ENCODE measurements at regions of chr6 and their contacts with region 1.

Region 1: DNA sequence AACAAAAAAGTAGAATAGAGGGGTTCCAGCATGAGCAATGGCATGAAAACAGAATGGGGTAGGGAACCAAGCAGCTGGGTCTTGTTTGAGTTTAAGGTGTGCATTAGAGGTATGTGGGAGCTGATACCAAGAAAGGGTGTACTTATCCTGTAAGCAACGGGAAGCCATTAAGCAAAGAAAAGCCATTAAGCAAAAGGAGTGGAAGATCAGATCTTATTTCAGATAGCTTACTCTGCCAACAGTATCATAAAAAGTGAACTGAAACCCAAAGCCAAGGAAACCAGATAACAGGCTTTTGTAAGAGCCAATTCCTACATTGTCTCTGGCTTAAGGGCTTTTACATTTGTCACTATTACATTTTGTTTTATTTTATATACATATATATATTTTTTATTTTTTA is 21.3 kb upstream of the BEND6 start:
- DNase-seq: peak in 1 of 3 donors; percentile 27
- H3K4me3 ChIP-seq: peak overlapping the region in 3 of 7 experiments; percentile 32 to 55 (median 40)
- H3K27ac ChIP-seq: no peak overlapping the region
- H3K4me1 ChIP-seq: peaks cover 8 to 32% (median 23%) of the 10 kb centered on the region in 4 experiments
- H3K27me3 ChIP-seq: no peaks in the 10 kb centered on the region

Region 2: GRCh38 chr6:56875961-56876360 is 57.7 kb before region 1 on chr6:
- CTCF ChIA-PET with region 1: no interaction called
- POLR2A ChIA-PET with region 1: no interaction called
- DNase-seq: no peak
- H3K4me3 ChIP-seq: no peak overlapping the region
- H3K27ac ChIP-seq: no peak overlapping the region
- H3K4me1 ChIP-seq: no peaks in the 10 kb centered on the region
- H3K27me3 ChIP-seq: no peaks in the 10 kb centered on the region

Region 3: GRCh38 chr6:56955171-56956045 is 21.8 kb after region 1 on chr6:
- CTCF ChIA-PET with region 1: interaction called, 15 read pairs
- POLR2A ChIA-PET with region 1: no interaction called
- DNase-seq: peak; percentile 83 to 95 (median 95)
- H3K4me3 ChIP-seq: peak overlapping the region; percentile 60 to 90 (median 78)
- H3K27ac ChIP-seq: peak overlapping the region in 1 of 2 experiments; percentile 51
- H3K4me1 ChIP-seq: peaks cover 3 to 27% (median 21%) of the 10 kb centered on the region in 4 experiments
- H3K27me3 ChIP-seq: peaks cover 2 to 20% (median 8%) of the 10 kb centered on the region in 5 experiments

Region 4: GRCh38 chr6:57006131-57006737 is 72.6 kb after region 1 on chr6:
- CTCF ChIA-PET with region 1: no interaction called
- POLR2A ChIA-PET with region 1: no interaction called
- DNase-seq: no peak
- H3K4me3 ChIP-seq: no peak overlapping the region
- H3K27ac ChIP-seq: no peak overlapping the region
- H3K4me1 ChIP-seq: no peaks in the 10 kb centered on the region
- H3K27me3 ChIP-seq: no peaks in the 10 kb centered on the region